Spleen (tissue), 13 donors: ENCODE measurements at regions of chr15 and their contacts with region 1.

Region 1: DNA sequence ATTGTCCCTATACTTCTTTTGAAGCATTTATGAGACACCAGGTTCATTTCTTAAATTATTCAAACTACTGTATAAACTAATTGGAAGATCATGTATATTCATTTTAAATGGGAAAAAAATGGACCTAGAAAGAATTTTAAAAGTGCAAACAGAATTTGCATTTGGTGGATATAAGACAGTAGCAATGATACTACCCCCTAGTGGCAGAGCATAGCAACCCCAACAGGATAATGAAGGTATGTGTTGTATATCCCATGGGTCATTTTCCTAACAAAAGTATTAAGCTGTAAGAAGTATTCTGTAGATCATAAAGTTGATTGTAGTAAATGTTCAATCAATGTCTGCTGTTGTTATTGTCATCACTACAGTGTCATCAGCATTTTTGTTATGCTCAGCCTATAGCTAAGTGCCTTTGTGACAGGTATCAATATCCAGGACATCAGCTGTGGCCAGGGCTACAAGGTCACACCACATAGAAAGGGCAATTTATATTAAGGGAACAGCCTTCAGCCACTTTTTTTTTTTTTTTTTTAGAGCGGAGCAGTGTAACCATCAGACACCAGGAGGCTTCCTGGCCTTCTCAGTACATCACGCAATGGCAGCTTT is 175.8 kb downstream of the FOXB1 start:
- DNase-seq: no peak
- H3K4me3 ChIP-seq: no peak overlapping the region
- H3K27ac ChIP-seq: no peak overlapping the region
- H3K4me1 ChIP-seq: no peaks in the 10 kb centered on the region
- H3K27me3 ChIP-seq: peaks cover 0 to 13% (median 0%) of the 10 kb centered on the region in 7 donors
- CTCF ChIP-seq: peak; percentile 47 to 82 (median 69)
- POLR2A ChIP-seq: no peak

Region 2: DNA sequence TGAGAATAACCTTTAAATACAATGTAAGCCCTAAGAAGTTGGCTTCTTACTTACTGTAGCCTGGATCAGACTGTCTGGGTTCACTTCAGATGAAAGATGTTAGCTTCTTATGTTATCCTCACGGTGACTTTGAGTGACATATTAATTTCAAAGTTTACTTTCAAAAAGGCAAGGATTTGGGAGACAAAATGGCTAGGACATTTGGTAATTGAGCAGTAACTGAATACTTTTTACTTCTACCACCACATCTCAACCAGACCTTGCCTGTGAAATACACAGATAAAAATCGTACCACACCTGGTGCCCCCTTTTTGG is 454.8 kb before region 1 on chr15:
- intact Hi-C with region 1: loop called (anchors 10 kb)
- DNase-seq: no peak
- H3K4me3 ChIP-seq: no peak overlapping the region
- H3K27ac ChIP-seq: no peak overlapping the region
- H3K4me1 ChIP-seq: no peaks in the 10 kb centered on the region
- H3K27me3 ChIP-seq: peaks cover 0 to 26% (median 0%) of the 10 kb centered on the region in 7 donors
- CTCF ChIP-seq: peak in 1 of 11 experiments; percentile 1
- POLR2A ChIP-seq: no peak

Region 3: GRCh38 chr15:59924812-59925522 is 254.9 kb before region 1 on chr15:
- intact Hi-C with region 1: loop called (anchors 10 kb)
- DNase-seq: no peak
- H3K4me3 ChIP-seq: no peak overlapping the region
- H3K27ac ChIP-seq: no peak overlapping the region
- H3K4me1 ChIP-seq: no peaks in the 10 kb centered on the region
- H3K27me3 ChIP-seq: peaks cover 0 to 29% (median 3%) of the 10 kb centered on the region in 7 donors
- CTCF ChIP-seq: no peak
- POLR2A ChIP-seq: no peak

Region 4: GRCh38 chr15:60667190-60667868 is 487.4 kb after region 1 on chr15:
- intact Hi-C with region 1: no loop called
- DNase-seq: no peak
- H3K4me3 ChIP-seq: no peak overlapping the region
- H3K27ac ChIP-seq: peak overlapping the region in 4 of 8 donors; percentile 16 to 59 (median 25)
- H3K4me1 ChIP-seq: peaks cover 0 to 3% (median 0%) of the 10 kb centered on the region in 6 donors
- H3K27me3 ChIP-seq: peaks cover 0 to 9% (median 0%) of the 10 kb centered on the region in 7 donors
- CTCF ChIP-seq: no peak
- POLR2A ChIP-seq: no peak